ENCODE measurements at regions of chr5 and their contacts with region 1.

Region 1: DNA sequence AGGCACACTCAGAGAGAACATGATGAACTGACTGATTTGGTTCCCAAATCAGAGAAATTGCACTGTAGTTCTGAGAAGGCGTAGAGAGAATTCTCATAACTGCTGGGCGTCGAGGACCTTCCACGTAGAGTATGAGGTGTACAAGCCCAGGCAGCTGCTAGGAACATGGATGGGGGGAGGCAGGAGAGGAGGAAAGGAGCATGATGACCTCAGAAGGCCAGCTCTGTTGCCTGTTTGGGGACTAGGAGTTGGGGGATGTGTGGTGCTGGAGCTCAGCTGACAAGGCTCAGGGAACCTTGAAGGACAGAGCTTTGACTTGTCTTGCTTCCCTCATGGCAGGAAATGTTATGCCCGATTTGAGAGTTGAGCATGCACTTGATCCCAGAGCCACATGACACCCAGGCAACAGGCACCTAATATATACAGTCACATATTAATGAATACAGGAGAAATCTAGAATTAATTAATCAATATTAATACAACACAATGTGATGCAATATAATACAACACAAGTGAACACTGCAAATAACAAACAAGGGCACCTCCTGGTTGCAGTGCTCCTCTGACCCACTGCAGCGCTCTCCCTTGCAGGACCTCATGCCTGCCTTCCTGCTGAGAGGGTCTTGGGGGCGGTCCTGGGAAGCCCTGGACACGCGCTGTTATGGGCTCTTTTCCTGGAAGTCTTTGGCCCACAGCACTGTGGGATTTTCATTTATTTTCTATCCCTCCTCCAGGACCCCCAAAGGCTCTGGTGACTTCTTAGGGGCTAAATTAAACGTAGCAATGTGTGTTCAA is 485.6 kb downstream of the IRX1 start:
- DNase-seq: no peak
- H3K4me3 ChIP-seq: no peak overlapping the region
- H3K27ac ChIP-seq: no peak overlapping the region
- H3K4me1 ChIP-seq: no peaks in the 10 kb centered on the region
- H3K27me3 ChIP-seq: peaks cover 34% of the 10 kb centered on the region
- CTCF ChIP-seq: no peak

Region 2: GRCh38 chr5:4802044-4802443 is 720.8 kb after region 1 on chr5:
- CTCF ChIA-PET with region 1: no interaction called
- POLR2A ChIA-PET with region 1: interaction called, 14 read pairs
- intact Hi-C with region 1: no loop called
- DNase-seq: no peak
- H3K4me3 ChIP-seq: no peak overlapping the region
- H3K27ac ChIP-seq: no peak overlapping the region
- H3K4me1 ChIP-seq: no peaks in the 10 kb centered on the region
- H3K27me3 ChIP-seq: peaks cover 43% of the 10 kb centered on the region
- CTCF ChIP-seq: no peak

Measured in PC-9 (cell line).